ENCODE measurements at regions of chr14 and their contacts with region 1.

Region 1: GRCh38 chr14:64478634-64479250 is 13.4 kb downstream of the AKAP5 start:
- DNase-seq: peak in 4 of 5 donors; percentile 27 to 37 (median 32)
- H3K4me3 ChIP-seq: no peak overlapping the region
- H3K4me3 Mint-ChIP-seq: no peak overlapping the region
- H3K27ac ChIP-seq: no peak overlapping the region
- H3K27ac Mint-ChIP-seq: peak overlapping the region in 1 of 7 donors; percentile 55
- H3K4me1 ChIP-seq: no peaks in the 10 kb centered on the region
- H3K4me1 Mint-ChIP-seq: peaks cover 7 to 17% (median 16%) of the 10 kb centered on the region in 4 donors
- H3K27me3 ChIP-seq: no peaks in the 10 kb centered on the region
- H3K27me3 Mint-ChIP-seq: no peaks in the 10 kb centered on the region

Region 2: DNA sequence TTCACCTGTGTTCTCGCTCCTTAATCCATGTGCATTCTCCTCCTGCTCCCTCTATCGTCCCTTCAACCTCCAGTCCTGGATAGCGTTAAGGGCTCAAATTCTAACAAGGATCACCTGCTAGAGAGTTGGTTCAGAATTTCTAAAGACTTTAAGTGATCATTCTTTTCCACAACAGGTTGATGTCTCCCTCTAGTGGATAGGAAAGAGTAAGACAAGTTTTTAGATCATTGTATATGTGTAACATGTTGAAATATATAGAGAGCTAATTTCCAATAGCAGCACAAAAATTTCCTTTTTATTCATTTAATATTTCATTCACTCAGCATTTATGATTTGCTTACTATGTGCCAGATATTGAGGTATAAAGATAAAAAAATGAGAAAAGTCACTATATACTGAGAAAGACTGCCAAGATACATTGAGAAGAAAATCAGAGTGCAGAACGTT is 175.2 kb before region 1 on chr14:
- CTCF ChIA-PET with region 1: interaction called, 8 read pairs
- POLR2A ChIA-PET with region 1: no interaction called
- intact Hi-C with region 1: loop called (anchors 1 kb)
- DNase-seq: peak in 4 of 5 donors; percentile 44 to 58 (median 50)
- H3K4me3 ChIP-seq: no peak overlapping the region
- H3K4me3 Mint-ChIP-seq: no peak overlapping the region
- H3K27ac ChIP-seq: no peak overlapping the region
- H3K27ac Mint-ChIP-seq: no peak overlapping the region
- H3K4me1 ChIP-seq: no peaks in the 10 kb centered on the region
- H3K4me1 Mint-ChIP-seq: peaks cover 0 to 4% (median 2%) of the 10 kb centered on the region in 4 donors
- H3K27me3 ChIP-seq: peaks cover 2% of the 10 kb centered on the region
- H3K27me3 Mint-ChIP-seq: peaks cover 0 to 3% of the 10 kb centered on the region in 2 donors

Region 3: GRCh38 chr14:64438181-64438841 is 40.4 kb before region 1 on chr14:
- CTCF ChIA-PET with region 1: interaction called, 117 read pairs
- POLR2A ChIA-PET with region 1: no interaction called
- intact Hi-C with region 1: no loop called
- DNase-seq: no peak
- H3K4me3 ChIP-seq: no peak overlapping the region
- H3K4me3 Mint-ChIP-seq: no peak overlapping the region
- H3K27ac ChIP-seq: no peak overlapping the region
- H3K27ac Mint-ChIP-seq: peak overlapping the region in 1 of 7 donors; percentile 50
- H3K4me1 ChIP-seq: no peaks in the 10 kb centered on the region
- H3K4me1 Mint-ChIP-seq: peaks cover 7 to 14% (median 12%) of the 10 kb centered on the region in 4 donors
- H3K27me3 ChIP-seq: no peaks in the 10 kb centered on the region
- H3K27me3 Mint-ChIP-seq: no peaks in the 10 kb centered on the region

Region 4: GRCh38 chr14:64491637-64492036 is 12.9 kb after region 1 on chr14:
- CTCF ChIA-PET with region 1: interaction called, 28 read pairs
- POLR2A ChIA-PET with region 1: interaction called, 11 read pairs
- intact Hi-C with region 1: no loop called
- DNase-seq: no peak
- H3K4me3 ChIP-seq: no peak overlapping the region
- H3K4me3 Mint-ChIP-seq: peak overlapping the region in 3 of 8 donors; percentile 21 to 43 (median 21)
- H3K27ac ChIP-seq: no peak overlapping the region
- H3K27ac Mint-ChIP-seq: peak overlapping the region in 4 of 7 donors; percentile 11 to 76 (median 50)
- H3K4me1 ChIP-seq: peaks cover 47% of the 10 kb centered on the region
- H3K4me1 Mint-ChIP-seq: peaks cover 40 to 62% (median 49%) of the 10 kb centered on the region in 4 donors
- H3K27me3 ChIP-seq: no peaks in the 10 kb centered on the region
- H3K27me3 Mint-ChIP-seq: no peaks in the 10 kb centered on the region

Region 5: GRCh38 chr14:64503478-64504309 is 25.0 kb after region 1 on chr14 and contains the start of gene ZBTB25:
- CTCF ChIA-PET with region 1: interaction called, 32 read pairs
- POLR2A ChIA-PET with region 1: interaction called, 318 read pairs
- intact Hi-C with region 1: loop called (anchors 2 kb)
- DNase-seq: peak; percentile 97 to 100 (median 98)
- H3K4me3 ChIP-seq: peak within 1 kb of the TSS; percentile 78 to 87
- H3K4me3 Mint-ChIP-seq: peak within 1 kb of the TSS; percentile 96 to 100 (median 98)
- H3K27ac ChIP-seq: peak within 1 kb of the TSS; percentile 100
- H3K27ac Mint-ChIP-seq: peak within 1 kb of the TSS; percentile 99 to 100 (median 100)
- H3K4me1 ChIP-seq: peaks cover 59% of the 10 kb centered on the region
- H3K4me1 Mint-ChIP-seq: peaks cover 33 to 84% (median 42%) of the 10 kb centered on the region in 4 donors
- H3K27me3 ChIP-seq: no peaks in the 10 kb centered on the region
- H3K27me3 Mint-ChIP-seq: peaks cover 0 to 2% of the 10 kb centered on the region in 2 donors
- total RNA-seq, gene ZBTB25: 84.1 to 87.5 TPM

Region 6: GRCh38 chr14:64654246-64654900 is 175.6 kb after region 1 on chr14:
- CTCF ChIA-PET with region 1: no interaction called
- POLR2A ChIA-PET with region 1: no interaction called
- intact Hi-C with region 1: no loop called
- DNase-seq: no peak
- H3K4me3 ChIP-seq: no peak overlapping the region
- H3K4me3 Mint-ChIP-seq: no peak overlapping the region
- H3K27ac ChIP-seq: no peak overlapping the region
- H3K27ac Mint-ChIP-seq: no peak overlapping the region
- H3K4me1 ChIP-seq: no peaks in the 10 kb centered on the region
- H3K4me1 Mint-ChIP-seq: peaks cover 6 to 14% (median 9%) of the 10 kb centered on the region in 4 donors
- H3K27me3 ChIP-seq: no peaks in the 10 kb centered on the region
- H3K27me3 Mint-ChIP-seq: peaks cover 4 to 12% of the 10 kb centered on the region in 2 donors